GM13977 (cell line): ENCODE measurements at regions of chr2 and their contacts with region 1.

Region 1: DNA sequence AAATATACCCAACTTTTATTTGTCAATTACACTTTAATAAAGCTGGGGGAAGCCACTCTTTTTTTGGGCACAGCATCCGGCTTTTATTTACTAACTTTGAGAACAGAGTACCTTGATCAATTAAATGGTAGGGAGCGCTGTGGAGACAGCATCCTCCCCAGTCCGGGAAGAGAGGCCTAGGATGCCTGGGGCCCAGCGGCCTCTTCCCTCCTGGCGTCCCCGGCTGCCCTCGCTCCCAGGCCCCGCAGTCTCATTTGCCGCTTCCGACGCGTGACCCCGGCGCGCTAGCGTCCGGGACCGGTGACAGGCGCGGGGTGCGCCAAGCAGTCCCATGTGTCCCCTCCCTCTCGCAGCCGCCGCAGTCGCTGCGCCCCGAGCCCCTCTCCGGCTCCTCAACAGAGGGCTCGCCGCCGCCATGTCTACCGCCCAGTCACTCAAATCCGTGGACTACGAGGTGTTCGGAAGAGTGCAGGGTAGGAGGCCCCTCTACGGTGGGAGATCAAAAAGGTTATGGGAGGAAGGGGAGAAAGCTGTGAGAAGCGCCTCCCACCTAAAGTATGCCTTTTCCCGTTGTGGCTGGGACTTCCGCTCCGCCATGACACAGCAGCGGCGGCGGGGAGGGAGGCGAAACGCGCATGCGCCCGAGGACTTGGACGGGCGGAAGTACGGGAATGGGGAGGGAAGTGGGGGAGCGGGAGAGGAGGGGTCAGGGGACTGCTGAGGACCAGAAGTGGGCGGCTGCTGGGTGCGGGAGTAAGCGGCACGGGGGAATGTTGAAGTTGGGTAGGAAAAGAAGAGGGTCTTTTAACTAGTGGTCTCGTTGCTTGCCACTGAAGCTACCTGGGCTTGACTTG is at the start of gene ACYP2:
- DNase-seq: peak; percentile 89
- CTCF ChIP-seq: no peak

Region 2: DNA sequence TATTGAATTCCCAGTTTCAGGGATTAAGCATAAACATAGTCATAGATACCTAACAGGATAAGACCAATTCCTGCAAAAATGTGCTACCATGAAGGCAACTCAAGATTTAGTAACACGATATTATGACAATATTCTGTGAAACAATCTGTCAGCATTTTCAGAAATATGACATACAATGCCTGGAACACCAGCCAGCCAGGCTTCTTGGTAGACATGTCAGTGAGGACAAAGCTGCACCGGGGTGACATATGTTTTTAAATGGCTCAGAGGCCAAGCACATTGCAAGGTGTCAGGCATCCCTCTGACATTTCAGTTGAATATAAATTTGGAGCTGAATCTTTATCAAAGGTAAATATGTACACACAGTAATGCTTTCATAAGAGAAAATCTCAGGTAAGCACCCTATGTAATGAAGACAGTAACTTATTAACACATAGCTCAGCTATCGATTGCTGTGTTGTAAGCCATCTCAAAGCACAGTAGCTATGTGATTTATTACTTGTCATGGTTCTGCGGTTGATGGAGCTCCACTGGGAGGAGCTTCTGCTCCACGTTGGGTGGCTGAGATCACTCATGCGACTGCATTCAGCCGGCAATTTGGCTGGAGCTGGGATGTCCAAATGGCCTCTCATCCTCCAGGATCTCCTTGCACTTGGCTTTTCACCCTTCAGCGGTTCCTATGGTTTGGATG is 576.1 kb after region 1 on chr2:
- in situ Hi-C with region 1: no loop called
- DNase-seq: no peak
- CTCF ChIP-seq: no peak

Region 3: GRCh38 chr2:54723131-54723995 is 607.9 kb after region 1 on chr2 and contains the start of gene EML6:
- in situ Hi-C with region 1: loop called (anchors 25 kb)
- DNase-seq: peak; percentile 99
- CTCF ChIP-seq: peak; percentile 20